Endothelial cell of umbilical vein (primary cell): ENCODE measurements at regions of chr19 and their contacts with region 1.

Region 1: DNA sequence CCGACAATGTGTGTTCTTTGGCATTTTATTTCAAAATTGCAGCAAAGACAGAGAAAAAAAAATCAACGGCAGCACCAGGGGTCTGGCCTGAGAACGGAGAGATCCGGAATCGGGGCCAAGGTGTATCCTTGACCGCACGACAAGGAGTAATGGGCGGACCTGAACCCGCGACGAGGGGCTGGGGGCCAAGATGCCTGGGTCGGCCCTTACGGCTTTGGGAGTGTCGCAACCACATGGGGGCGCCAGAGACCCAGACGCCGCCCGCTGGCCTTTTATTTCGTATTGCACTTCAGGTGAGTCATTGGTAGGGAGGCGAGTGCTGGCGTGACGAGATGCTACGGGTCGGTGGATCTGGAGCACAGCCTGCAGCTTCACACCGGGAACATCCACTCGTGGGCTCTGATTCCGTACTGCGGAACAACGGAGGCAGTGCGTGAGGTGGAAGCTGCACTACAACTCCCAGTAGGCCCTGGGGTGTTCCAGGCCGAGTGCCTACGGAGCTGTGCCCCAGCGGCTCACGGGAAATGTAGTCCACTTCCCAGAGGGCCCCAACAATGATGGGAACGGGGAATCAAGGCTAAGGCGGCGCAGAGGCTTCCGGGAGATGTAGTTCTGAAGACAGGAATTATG is 15.7 kb downstream of the BCAT2 start:
- DNase-seq: peak; percentile 95
- H3K4me3 ChIP-seq: peak overlapping the region in 2 of 3 experiments; percentile 18 to 37
- H3K27ac ChIP-seq: peak overlapping the region; percentile 2
- H3K4me1 ChIP-seq: peaks cover 3% of the 10 kb centered on the region
- H3K27me3 ChIP-seq: no peaks in the 10 kb centered on the region
- CTCF ChIP-seq: peak; percentile 94 to 96
- POLR2A ChIP-seq: peak; percentile 48

Region 2: DNA sequence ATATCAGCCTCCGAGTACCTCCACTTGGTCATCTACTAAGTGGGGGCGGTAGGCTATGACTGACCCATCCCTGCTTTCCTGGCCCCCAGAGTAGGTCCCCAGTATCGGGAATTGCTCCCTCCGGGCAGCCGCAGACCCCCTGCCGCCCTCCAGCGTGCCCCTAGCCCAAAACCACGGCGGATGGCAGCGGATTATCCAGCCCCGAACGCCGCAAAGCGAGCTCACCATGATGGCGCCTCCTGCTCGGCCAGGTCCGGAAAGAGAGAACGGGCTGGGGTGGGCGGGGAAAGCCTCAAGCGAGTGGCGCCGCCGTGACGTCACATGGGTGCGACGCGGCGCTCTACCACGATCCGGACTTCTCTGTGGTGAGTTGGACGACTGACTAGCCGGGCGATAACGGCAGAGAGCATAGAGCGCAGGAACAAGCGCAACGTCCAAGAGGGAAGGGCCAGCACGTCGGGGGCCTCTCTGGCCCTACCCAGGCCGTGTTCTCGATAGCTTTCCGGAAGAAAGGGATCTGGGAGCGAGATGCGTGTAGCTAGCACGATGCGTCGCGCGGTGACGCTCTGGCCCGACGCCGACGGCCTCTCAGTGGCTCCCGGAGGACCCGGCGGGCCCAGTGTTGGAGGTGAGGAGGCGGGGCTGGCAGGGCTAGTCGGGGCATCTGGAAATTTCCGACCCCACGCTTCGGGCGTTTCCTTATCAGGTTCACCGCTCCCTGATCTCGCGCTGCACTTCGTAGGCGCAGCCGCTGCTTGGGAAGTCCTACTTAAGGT is 176.1 kb before region 1 on chr19 and contains the starts of genes RPL18 and SPHK2:
- CTCF ChIA-PET with region 1: no interaction called
- POLR2A ChIA-PET with region 1: no interaction called
- dilution Hi-C with region 1: no loop called
- intact Hi-C with region 1: no loop called
- DNase-seq: peak; percentile 100
- H3K4me3 ChIP-seq: peak within 1 kb of the TSS; percentile 85 to 99 (median 96)
- H3K27ac ChIP-seq: peak within 1 kb of the TSS; percentile 86
- H3K4me1 ChIP-seq: peaks cover 31% of the 10 kb centered on the region
- H3K27me3 ChIP-seq: no peaks in the 10 kb centered on the region
- CTCF ChIP-seq: no peak
- POLR2A ChIP-seq: peak; percentile 96
- total RNA-seq, gene RPL18: 1,402 and 1,407 TPM in 2 replicates
- total RNA-seq, gene SPHK2: 30.5 and 31.1 TPM in 2 replicates

Region 3: GRCh38 chr19:48780631-48781391 is 14.4 kb before region 1 on chr19:
- CTCF ChIA-PET with region 1: interaction called, 16 read pairs
- POLR2A ChIA-PET with region 1: no interaction called
- dilution Hi-C with region 1: no loop called
- intact Hi-C with region 1: no loop called
- DNase-seq: peak; percentile 43
- H3K4me3 ChIP-seq: no peak overlapping the region
- H3K27ac ChIP-seq: peak overlapping the region; percentile 53
- H3K4me1 ChIP-seq: peaks cover 9% of the 10 kb centered on the region
- H3K27me3 ChIP-seq: no peaks in the 10 kb centered on the region
- CTCF ChIP-seq: no peak
- POLR2A ChIP-seq: no peak

Region 4: DNA sequence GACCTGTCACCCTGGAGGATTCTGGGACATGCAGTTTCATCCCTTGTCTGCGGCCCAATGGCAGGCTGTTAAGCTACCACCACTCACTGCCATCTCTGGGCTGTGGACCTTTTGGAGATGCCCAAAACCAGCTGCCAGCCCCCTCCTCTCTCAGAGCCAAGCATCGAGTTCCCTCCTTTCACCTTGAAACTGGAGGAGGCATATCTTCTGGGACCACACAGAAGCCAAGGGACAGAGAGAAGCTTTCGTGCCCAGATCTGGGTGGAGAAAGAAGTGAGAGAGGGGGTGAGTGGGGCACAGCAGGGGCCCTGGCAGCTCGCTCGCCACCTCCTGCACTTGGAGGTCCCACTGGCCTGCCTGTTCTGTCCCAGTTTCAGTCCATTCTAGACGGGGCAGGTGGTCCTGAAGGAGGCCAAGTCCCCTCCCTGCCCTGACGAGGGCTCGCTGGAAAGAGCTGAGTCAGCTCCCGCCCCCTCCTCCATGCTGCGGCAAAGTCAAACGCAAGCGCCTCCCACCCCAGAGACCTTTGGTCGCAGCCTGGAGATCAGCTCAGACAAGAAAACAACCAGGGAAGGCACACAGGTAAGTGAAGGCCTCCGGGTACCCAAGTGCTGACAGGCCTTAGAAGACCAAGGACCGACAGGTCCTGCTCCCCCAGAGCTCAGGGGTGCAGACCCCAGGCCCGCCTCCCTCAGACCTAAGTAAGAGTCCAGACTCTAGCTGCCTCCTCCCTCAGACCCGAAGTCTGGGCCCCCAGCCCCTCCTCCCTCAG is 11.8 kb after region 1 on chr19:
- CTCF ChIA-PET with region 1: interaction called, 24 read pairs
- POLR2A ChIA-PET with region 1: no interaction called
- dilution Hi-C with region 1: no loop called
- intact Hi-C with region 1: no loop called
- DNase-seq: no peak
- H3K4me3 ChIP-seq: no peak overlapping the region
- H3K27ac ChIP-seq: no peak overlapping the region
- H3K4me1 ChIP-seq: peaks cover 7% of the 10 kb centered on the region
- H3K27me3 ChIP-seq: no peaks in the 10 kb centered on the region
- CTCF ChIP-seq: no peak
- POLR2A ChIP-seq: no peak

Region 5: DNA sequence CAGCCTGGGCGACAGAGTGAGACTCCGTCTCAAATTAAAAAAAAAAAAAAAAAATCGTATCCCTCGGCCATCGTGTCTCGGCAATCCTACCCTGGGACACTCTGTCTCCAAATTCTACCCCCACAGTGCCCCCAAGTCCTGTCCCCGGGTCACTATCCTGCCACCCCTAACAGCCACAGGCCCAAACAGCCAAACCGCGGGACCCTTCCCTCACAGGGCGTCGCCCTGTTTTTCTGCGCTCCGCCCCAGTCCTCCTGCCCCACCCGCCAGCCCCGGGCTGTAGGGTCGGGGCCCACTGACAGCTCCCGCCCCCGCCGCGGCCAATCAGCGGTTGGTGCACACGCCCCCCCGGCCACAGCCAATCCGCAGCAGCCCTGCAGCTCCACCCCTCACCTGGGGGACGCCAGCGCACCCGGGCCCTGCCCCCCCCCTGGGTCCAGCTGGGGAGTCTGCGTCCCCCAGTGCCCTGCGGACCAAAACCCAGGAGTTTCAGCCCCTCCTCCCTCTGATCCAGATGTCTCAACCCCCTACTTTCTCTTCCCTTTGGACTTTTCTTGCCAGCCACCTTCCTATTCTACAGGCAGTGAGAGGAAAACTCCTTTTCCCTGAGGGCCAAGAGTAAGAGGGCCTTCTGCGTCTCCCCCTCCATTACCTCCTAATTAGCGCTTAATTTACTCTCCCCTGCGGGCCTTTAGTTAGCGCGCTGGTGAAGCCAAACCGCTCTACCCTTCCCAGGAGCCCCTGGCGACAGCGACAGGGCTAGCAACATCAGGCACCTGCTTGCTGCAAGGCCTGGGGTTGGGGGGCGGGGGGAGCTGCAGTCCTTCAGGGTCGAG is 17.1 kb after region 1 on chr19:
- CTCF ChIA-PET with region 1: interaction called, 24 read pairs
- POLR2A ChIA-PET with region 1: no interaction called
- dilution Hi-C with region 1: no loop called
- intact Hi-C with region 1: no loop called
- DNase-seq: peak; percentile 72
- H3K4me3 ChIP-seq: peak overlapping the region; percentile 12 to 29 (median 20)
- H3K27ac ChIP-seq: no peak overlapping the region
- H3K4me1 ChIP-seq: peaks cover 13% of the 10 kb centered on the region
- H3K27me3 ChIP-seq: no peaks in the 10 kb centered on the region
- CTCF ChIP-seq: no peak
- POLR2A ChIP-seq: peak; percentile 49

Region 6: DNA sequence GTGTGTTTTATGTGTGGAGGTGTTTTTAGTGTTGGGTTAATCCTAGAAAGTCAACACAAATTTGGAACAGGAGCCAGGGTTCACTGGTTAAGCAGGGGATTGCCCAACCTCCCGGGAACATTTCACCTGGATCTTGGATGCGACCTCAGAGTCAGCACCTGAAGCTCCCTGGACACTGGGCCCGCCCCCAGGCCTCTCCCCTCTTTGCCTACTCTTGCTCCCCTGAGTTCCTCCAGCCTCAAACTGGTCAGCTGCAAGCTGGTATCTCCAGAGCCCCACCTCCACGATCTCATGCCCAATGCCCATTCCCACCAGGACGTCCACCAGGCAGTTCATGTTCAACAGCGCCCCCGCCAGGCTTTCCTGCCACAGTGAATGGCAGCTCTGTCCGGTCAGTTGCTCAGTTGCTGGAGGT is 31.4 kb after region 1 on chr19:
- CTCF ChIA-PET with region 1: interaction called, 16 read pairs
- POLR2A ChIA-PET with region 1: no interaction called
- dilution Hi-C with region 1: no loop called
- intact Hi-C with region 1: no loop called
- DNase-seq: no peak
- H3K4me3 ChIP-seq: no peak overlapping the region
- H3K27ac ChIP-seq: no peak overlapping the region
- H3K4me1 ChIP-seq: no peaks in the 10 kb centered on the region
- H3K27me3 ChIP-seq: no peaks in the 10 kb centered on the region
- CTCF ChIP-seq: no peak
- POLR2A ChIP-seq: no peak

Region 7: DNA sequence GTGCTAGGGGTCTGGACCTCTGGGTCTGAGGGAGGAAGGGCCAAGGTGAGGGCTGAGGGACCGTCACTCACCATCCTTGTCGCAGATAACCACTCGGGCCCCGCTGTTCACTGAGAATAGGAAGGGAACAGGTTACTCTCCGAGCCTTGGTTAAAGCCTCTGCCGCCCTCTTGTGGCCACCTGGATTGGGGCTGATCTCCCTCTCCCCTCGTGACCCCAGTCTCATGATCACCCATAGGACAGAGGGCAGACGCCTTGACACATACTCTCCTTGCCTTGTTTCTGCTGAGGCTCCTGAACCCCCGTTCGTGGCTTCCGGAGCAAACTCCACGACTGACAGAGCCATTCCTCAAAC is 40.5 kb after region 1 on chr19:
- CTCF ChIA-PET with region 1: interaction called, 427 read pairs
- POLR2A ChIA-PET with region 1: interaction called, 3 read pairs
- dilution Hi-C with region 1: no loop called
- intact Hi-C with region 1: loop called (anchors 1 kb)
- DNase-seq: peak; percentile 87
- H3K4me3 ChIP-seq: peak overlapping the region; percentile 38 to 61 (median 57)
- H3K27ac ChIP-seq: peak overlapping the region; percentile 52
- H3K4me1 ChIP-seq: peaks cover 5% of the 10 kb centered on the region
- H3K27me3 ChIP-seq: no peaks in the 10 kb centered on the region
- CTCF ChIP-seq: peak; percentile 88 to 92
- POLR2A ChIP-seq: no peak

Region 8: DNA sequence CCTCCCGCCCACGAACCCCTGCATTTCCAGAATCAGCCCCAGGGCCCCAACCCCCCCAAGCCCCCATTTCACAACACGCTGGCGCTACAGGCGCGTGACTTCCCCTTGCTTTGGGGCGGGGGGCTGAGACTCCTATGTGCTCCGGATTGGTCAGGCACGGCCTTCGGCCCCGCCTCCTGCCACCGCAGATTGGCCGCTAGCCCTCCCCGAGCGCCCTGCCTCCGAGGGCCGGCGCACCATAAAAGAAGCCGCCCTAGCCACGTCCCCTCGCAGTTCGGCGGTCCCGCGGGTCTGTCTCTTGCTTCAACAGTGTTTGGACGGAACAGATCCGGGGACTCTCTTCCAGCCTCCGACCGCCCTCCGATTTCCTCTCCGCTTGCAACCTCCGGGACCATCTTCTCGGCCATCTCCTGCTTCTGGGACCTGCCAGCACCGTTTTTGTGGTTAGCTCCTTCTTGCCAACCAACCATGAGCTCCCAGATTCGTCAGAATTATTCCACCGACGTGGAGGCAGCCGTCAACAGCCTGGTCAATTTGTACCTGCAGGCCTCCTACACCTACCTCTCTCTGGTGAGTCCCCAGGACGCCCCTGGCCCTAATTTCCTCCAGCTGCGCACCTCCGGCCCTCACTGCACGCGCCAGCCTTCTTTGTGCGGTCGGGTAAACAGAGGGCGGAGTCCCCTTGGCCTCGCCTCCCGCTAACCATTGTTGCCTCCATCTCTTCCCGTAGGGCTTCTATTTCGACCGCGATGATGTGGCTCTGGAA is 170.1 kb after region 1 on chr19 and contains the start of gene FTL:
- CTCF ChIA-PET with region 1: interaction called, 133 read pairs
- POLR2A ChIA-PET with region 1: no interaction called
- dilution Hi-C with region 1: no loop called
- intact Hi-C with region 1: no loop called
- DNase-seq: peak; percentile 96
- H3K4me3 ChIP-seq: peak within 1 kb of the TSS; percentile 35 to 79 (median 60)
- H3K27ac ChIP-seq: peak within 1 kb of the TSS; percentile 97
- H3K4me1 ChIP-seq: peaks cover 25% of the 10 kb centered on the region
- H3K27me3 ChIP-seq: no peaks in the 10 kb centered on the region
- CTCF ChIP-seq: no peak
- POLR2A ChIP-seq: peak; percentile 100
- total RNA-seq, gene FTL: 1,636 and 1,937 TPM in 2 replicates